ENCODE measurements at regions of chr3 and their contacts with region 1.

Region 1: GRCh38 chr3:186551387-186551786 is 7.2 kb upstream of the CRYGS start:
- DNase-seq: no peak
- ATAC-seq: no peak

Region 2: GRCh38 chr3:185992831-185993374 is 558.5 kb before region 1 on chr3:
- intact Hi-C with region 1: loop called in 1 of 2 experiments (anchors 5 kb)
- DNase-seq: no peak
- ATAC-seq: peak; percentile 40 to 73

Region 3: DNA sequence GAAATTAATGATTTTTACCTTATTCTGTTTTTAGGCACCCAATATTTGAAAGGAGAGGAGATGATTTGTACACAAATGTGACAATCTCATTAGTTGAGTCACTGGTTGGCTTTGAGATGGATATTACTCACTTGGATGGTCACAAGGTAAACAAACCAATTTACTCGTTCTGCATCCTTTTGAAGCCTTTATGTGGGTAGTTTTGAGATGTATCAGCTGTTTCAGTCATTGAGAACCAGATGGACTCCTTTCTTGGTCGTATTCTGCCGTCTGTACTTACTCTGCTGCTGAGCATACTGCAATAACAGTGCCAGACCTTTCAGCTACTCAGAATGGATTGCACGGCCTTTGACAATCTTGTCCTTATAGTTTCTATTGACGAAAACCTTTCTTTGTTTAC is 32.4 kb after region 1 on chr3:
- intact Hi-C with region 1: loop called in 1 of 2 experiments (anchors 2 kb)
- DNase-seq: no peak
- ATAC-seq: no peak